ENCODE measurements at regions of chr16 and their contacts with region 1.

Region 1: GRCh38 chr16:2267913-2268666 is at the start of gene RNPS1:
- DNase-seq: peak; percentile 91 to 99 (median 96)
- ATAC-seq: peak; percentile 80 to 85
- H3K4me3 Mint-ChIP-seq: peak within 1 kb of the TSS; percentile 92 to 99 (median 96)
- H3K27ac Mint-ChIP-seq: peak within 1 kb of the TSS; percentile 94 to 99 (median 98)
- H3K4me1 Mint-ChIP-seq: peaks cover 22 to 51% (median 42%) of the 10 kb centered on the region in 4 donors
- H3K27me3 Mint-ChIP-seq: no peaks in the 10 kb centered on the region
- polyA plus RNA-seq, gene RNPS1: 197 to 289 (median 228) TPM

Region 2: DNA sequence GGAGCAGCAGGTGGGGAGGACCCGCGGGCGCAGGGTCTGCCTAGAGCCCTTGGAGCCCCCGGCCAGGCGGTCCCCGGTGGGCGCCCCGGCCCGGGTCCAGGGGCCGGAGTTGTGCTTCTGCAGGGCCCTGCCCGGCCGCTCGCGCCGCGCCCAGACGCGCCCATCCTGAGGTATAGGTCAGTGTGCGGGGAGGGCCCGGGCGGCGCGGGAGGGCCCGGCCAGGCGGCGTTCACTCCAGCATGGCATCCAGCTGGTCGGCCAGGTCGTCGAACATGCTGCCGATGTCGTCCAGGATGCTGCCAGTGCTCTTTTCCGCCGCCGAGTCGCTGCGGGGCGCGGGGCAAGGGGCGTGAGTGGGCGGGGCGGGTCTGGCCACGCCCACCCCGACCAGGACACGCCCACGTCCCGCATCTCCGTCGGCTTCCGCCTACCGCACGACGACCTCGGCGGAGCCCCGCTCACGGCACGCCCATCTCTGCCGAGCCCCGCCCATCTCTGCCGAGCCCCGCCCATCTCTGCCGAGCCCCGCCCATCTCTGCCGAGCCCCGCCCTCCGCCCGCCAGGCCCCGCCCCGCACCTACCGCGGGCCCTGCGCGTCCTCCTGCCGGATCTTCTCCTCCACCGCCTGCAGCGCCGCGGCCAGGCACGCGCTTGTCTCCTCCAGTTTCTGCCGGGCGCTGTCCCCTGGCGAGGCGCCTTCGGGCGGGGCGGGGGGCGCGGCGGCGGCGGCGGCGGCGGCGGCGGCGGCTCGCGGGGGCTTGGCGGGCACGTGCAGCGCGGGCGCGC is 89.6 kb before region 1 on chr16:
- POLR2A ChIA-PET with region 1: no interaction called
- DNase-seq: peak in 8 of 10 donors; percentile 18 to 45 (median 31)
- ATAC-seq: peak; percentile 80 to 84
- H3K4me3 Mint-ChIP-seq: no peak overlapping the region
- H3K27ac Mint-ChIP-seq: no peak overlapping the region
- H3K4me1 Mint-ChIP-seq: peaks cover 0 to 6% (median under 1%) of the 10 kb centered on the region in 4 donors
- H3K27me3 Mint-ChIP-seq: no peaks in the 10 kb centered on the region

Region 3: GRCh38 chr16:2213817-2214720 is 54.0 kb before region 1 on chr16:
- POLR2A ChIA-PET with region 1: interaction called, 17 read pairs
- DNase-seq: no peak
- ATAC-seq: peak in 1 of 2 donors; percentile 19
- H3K4me3 Mint-ChIP-seq: peak overlapping the region; percentile 59 to 85 (median 74)
- H3K27ac Mint-ChIP-seq: peak overlapping the region in 6 of 10 donors; percentile 33 to 81 (median 40)
- H3K4me1 Mint-ChIP-seq: peaks cover 5 to 23% (median 14%) of the 10 kb centered on the region in 4 donors
- H3K27me3 Mint-ChIP-seq: no peaks in the 10 kb centered on the region

Region 4: DNA sequence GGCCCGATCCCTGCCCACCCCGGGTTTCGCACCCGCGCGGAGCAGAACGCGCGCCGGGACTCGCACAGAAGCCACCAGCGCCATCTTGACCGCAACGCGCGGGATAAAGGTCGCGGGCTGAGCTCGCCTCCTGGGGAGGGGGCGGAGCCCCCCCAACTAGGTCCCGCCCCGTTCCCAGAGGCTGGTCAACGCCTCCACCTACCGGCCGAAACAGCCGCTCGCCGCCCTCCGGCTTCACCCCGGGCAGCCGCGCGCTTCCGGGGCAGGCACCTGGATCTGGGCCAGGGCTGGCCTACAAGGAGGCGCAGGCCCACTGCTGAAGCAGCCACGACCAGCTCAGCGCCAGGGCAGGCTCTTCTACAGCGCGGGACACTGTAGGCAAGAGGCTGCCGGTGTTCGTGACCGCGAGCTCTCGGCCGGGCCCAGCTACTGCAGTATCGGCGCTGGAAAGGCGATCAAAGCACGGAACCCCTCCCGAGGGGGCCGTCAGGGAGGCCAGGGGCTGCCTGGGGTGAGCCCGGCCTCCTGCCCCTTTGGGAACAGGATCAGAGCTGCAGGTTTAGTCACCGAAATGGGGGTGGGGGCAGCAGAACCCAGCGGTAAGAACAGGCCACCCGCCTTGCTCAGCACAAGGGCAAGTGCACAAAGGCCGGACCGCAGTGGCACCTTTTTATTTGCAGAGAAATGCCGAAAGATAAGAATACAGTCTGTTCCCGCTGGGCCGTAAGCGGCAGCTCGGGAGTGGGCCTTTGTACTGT is 16.4 kb before region 1 on chr16 and contains the start of gene ECI1:
- POLR2A ChIA-PET with region 1: interaction called, 31 read pairs
- DNase-seq: peak; percentile 40 to 85 (median 66)
- ATAC-seq: peak; percentile 76 to 83
- H3K4me3 Mint-ChIP-seq: peak within 1 kb of the TSS; percentile 82 to 90 (median 86)
- H3K27ac Mint-ChIP-seq: peak within 1 kb of the TSS; percentile 82 to 95 (median 92)
- H3K4me1 Mint-ChIP-seq: peaks cover 0 to 16% (median 7%) of the 10 kb centered on the region in 4 donors
- H3K27me3 Mint-ChIP-seq: peaks cover 0 to 1% (median 0%) of the 10 kb centered on the region in 5 donors
- polyA plus RNA-seq, gene ECI1: 30.6 to 40.4 (median 31.0) TPM

Region 5: DNA sequence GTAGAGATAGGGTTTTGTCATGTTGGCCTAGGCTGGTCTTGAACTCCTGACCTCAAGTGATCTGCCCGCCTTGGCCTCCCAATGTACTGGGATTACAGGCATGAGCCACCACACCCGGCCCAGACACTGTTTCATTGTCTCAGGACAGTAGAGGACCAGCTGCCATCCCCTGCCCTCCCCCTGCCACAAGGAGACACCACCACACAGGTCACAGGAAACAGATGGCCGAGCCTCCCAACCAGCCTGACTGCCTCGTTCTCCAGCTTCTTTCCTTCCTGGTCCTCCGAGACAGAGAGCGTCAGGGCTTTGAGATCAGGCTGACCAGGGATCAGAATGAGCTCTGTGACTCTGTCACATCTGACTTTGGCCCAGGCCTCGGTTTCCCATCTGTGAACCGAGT is 20.6 kb after region 1 on chr16:
- POLR2A ChIA-PET with region 1: no interaction called
- DNase-seq: no peak
- ATAC-seq: no peak
- H3K4me3 Mint-ChIP-seq: no peak overlapping the region
- H3K27ac Mint-ChIP-seq: no peak overlapping the region
- H3K4me1 Mint-ChIP-seq: no peaks in the 10 kb centered on the region
- H3K27me3 Mint-ChIP-seq: no peaks in the 10 kb centered on the region